ENCODE measurements at regions of chr21 and their contacts with region 1.

Region 1: GRCh38 chr21:33266050-33266788 is at the start of gene IL10RB:
- DNase-seq: peak; percentile 71
- ATAC-seq: peak; percentile 74
- H3K4me3 Mint-ChIP-seq: peak within 1 kb of the TSS; percentile 92
- H3K27ac Mint-ChIP-seq: peak within 1 kb of the TSS; percentile 95
- H3K4me1 Mint-ChIP-seq: peaks cover 66% of the 10 kb centered on the region
- H3K27me3 Mint-ChIP-seq: no peaks in the 10 kb centered on the region
- CTCF ChIP-seq: no peak
- total RNA-seq, gene IL10RB: 36.7 and 37.9 TPM in 2 replicates

Region 2: DNA sequence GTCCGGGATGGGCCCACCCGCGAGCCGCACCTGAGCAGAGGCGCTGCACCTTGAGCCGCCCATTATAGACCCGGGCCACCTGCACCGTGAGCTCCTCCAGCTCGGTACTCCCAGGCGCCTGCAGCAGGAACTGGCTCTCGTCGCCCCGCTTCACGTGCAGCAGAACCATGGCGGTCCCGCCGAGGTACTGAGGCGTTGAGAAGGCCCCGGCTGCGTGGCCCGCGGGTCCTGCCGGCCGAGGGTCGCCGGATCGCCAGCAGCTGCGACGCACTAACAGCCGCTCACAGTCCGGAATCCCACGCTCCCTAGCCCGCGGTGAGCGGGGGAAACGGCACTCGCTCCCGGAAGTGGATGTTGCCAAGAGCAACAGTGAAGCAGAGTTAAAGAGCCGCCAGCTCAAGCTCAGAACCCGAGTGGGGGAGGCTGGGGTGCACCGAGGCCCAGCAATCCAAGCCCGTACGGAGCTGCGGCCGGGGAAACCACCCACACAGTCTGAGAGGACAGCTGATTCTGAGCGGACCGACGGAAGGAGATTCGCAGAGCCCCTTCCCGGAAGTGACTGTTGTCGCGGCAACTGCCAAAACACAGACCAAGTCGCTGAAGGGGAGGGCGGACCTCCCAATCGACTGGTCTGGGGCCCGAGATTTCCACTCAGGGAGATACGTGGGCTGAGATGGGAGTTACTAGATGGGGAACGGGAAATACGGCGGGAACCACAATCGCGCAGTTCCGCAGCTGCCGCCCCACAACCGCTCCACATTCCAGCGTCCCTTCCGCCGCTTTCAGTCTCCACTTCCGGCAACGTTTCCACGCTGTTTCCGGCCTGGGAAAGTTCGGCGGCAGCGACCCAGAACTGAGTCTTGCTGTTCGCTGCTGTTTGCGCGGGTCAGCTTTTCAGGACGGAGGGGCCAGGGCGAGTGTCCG is 653.9 kb before region 1 on chr21 and contains the start of gene CFAP298:
- CTCF ChIA-PET with region 1: no interaction called
- POLR2A ChIA-PET with region 1: no interaction called
- intact Hi-C with region 1: loop called (anchors 2 kb)
- DNase-seq: peak; percentile 83
- ATAC-seq: peak; percentile 89
- H3K4me3 Mint-ChIP-seq: peak within 1 kb of the TSS; percentile 97
- H3K27ac Mint-ChIP-seq: peak within 1 kb of the TSS; percentile 96
- H3K4me1 Mint-ChIP-seq: peaks cover 12% of the 10 kb centered on the region
- H3K27me3 Mint-ChIP-seq: no peaks in the 10 kb centered on the region
- CTCF ChIP-seq: no peak
- total RNA-seq, gene CFAP298: 36.4 and 37.3 TPM in 2 replicates

Region 3: GRCh38 chr21:32929633-32930038 is 336.6 kb before region 1 on chr21:
- CTCF ChIA-PET with region 1: no interaction called
- POLR2A ChIA-PET with region 1: no interaction called
- intact Hi-C with region 1: no loop called
- DNase-seq: no peak
- ATAC-seq: no peak
- H3K4me3 Mint-ChIP-seq: no peak overlapping the region
- H3K27ac Mint-ChIP-seq: no peak overlapping the region
- H3K4me1 Mint-ChIP-seq: peaks cover 22% of the 10 kb centered on the region
- H3K27me3 Mint-ChIP-seq: peaks cover 3% of the 10 kb centered on the region
- CTCF ChIP-seq: no peak

Region 4: DNA sequence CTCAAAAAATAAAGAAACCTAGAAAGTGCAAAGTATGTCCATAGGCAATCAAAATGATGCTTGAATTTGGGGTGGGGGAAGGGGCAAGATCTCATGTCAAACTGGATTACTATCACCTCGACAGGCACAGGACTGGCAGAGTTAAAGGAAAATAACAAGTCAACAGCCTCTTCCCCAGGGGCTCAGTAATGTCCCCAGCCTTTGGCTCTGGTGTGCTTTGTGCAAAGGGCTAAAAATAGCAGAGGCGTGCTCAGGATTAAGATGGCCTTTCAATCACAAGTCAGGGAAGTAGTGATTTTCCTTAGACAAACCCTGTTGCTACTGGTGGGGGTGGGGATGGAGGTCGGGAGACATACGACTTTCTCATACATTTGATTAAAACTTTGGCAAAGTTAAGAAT is 304.0 kb before region 1 on chr21:
- CTCF ChIA-PET with region 1: no interaction called
- POLR2A ChIA-PET with region 1: no interaction called
- intact Hi-C with region 1: no loop called
- DNase-seq: no peak
- ATAC-seq: no peak
- H3K4me3 Mint-ChIP-seq: no peak overlapping the region
- H3K27ac Mint-ChIP-seq: no peak overlapping the region
- H3K4me1 Mint-ChIP-seq: no peaks in the 10 kb centered on the region
- H3K27me3 Mint-ChIP-seq: peaks cover 49% of the 10 kb centered on the region
- CTCF ChIP-seq: no peak

Region 5: GRCh38 chr21:33238565-33239255 is 27.5 kb before region 1 on chr21:
- CTCF ChIA-PET with region 1: interaction called, 3 read pairs
- POLR2A ChIA-PET with region 1: interaction called, 14 read pairs
- intact Hi-C with region 1: loop called (anchors 1 kb)
- DNase-seq: no peak
- ATAC-seq: peak; percentile 71
- H3K4me3 Mint-ChIP-seq: peak overlapping the region; percentile 66
- H3K27ac Mint-ChIP-seq: peak overlapping the region; percentile 89
- H3K4me1 Mint-ChIP-seq: peaks cover 57% of the 10 kb centered on the region
- H3K27me3 Mint-ChIP-seq: no peaks in the 10 kb centered on the region
- CTCF ChIP-seq: no peak

Region 6: GRCh38 chr21:33308586-33309490 is 42.6 kb after region 1 on chr21:
- CTCF ChIA-PET with region 1: no interaction called
- POLR2A ChIA-PET with region 1: interaction called, 11 read pairs
- intact Hi-C with region 1: no loop called
- DNase-seq: no peak
- ATAC-seq: peak; percentile 82
- H3K4me3 Mint-ChIP-seq: no peak overlapping the region
- H3K27ac Mint-ChIP-seq: peak overlapping the region; percentile 51
- H3K4me1 Mint-ChIP-seq: peaks cover 47% of the 10 kb centered on the region
- H3K27me3 Mint-ChIP-seq: no peaks in the 10 kb centered on the region
- CTCF ChIP-seq: no peak

Region 7: DNA sequence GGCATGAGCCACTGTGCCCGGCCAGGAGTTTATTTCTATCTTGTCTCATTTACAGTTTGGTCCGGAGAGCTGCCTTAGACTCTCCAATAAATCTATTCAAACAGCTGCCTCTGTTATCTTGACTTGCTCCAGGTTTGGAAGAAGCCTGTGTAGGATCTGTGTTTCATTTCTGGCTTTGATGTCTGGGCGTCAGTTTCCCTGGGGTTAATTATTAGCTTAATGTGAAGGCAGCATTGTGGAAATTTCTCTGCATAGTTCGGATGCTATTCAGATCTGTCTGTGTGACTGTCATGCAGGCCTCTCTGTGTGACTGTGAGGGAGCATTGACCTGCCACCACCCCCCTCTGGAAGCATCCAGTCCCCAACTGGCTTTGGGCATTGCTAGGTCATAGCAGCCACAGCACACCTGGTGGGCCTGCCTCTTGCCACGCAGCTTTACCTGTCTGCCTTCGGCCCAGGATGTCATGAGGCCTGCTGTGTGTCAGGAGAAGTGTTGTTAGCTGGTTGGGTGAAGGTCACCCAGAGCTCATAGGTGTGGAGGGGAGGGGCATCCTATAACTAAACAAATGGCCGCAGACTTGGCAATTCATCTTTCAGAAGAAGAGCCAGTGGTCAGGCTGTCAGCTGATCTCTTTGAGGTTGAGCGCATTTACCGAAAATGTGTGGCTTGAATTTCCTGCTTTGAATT is 146.8 kb after region 1 on chr21:
- CTCF ChIA-PET with region 1: no interaction called
- POLR2A ChIA-PET with region 1: interaction called, 11 read pairs
- intact Hi-C with region 1: no loop called
- DNase-seq: no peak
- ATAC-seq: peak; percentile 49
- H3K4me3 Mint-ChIP-seq: peak overlapping the region; percentile 50
- H3K27ac Mint-ChIP-seq: peak overlapping the region; percentile 86
- H3K4me1 Mint-ChIP-seq: peaks cover 60% of the 10 kb centered on the region
- H3K27me3 Mint-ChIP-seq: no peaks in the 10 kb centered on the region
- CTCF ChIP-seq: no peak

Region 8: GRCh38 chr21:33479679-33480480 is 213.7 kb after region 1 on chr21 and contains the start of gene TMEM50B:
- CTCF ChIA-PET with region 1: no interaction called
- POLR2A ChIA-PET with region 1: interaction called, 11 read pairs
- intact Hi-C with region 1: no loop called
- DNase-seq: peak; percentile 88
- ATAC-seq: peak; percentile 88
- H3K4me3 Mint-ChIP-seq: peak within 1 kb of the TSS; percentile 92
- H3K27ac Mint-ChIP-seq: peak within 1 kb of the TSS; percentile 90
- H3K4me1 Mint-ChIP-seq: peaks cover 20% of the 10 kb centered on the region
- H3K27me3 Mint-ChIP-seq: no peaks in the 10 kb centered on the region
- CTCF ChIP-seq: no peak
- total RNA-seq, gene TMEM50B: 42.3 and 47.2 TPM in 2 replicates

Measured in activated B cell treated with CpG ODN at 0.5 μM for 24 hours (primary cell).